Head of caudate nucleus (tissue), 42 donors: ENCODE measurements at regions of chr11 and their contacts with region 1.

Region 1: DNA sequence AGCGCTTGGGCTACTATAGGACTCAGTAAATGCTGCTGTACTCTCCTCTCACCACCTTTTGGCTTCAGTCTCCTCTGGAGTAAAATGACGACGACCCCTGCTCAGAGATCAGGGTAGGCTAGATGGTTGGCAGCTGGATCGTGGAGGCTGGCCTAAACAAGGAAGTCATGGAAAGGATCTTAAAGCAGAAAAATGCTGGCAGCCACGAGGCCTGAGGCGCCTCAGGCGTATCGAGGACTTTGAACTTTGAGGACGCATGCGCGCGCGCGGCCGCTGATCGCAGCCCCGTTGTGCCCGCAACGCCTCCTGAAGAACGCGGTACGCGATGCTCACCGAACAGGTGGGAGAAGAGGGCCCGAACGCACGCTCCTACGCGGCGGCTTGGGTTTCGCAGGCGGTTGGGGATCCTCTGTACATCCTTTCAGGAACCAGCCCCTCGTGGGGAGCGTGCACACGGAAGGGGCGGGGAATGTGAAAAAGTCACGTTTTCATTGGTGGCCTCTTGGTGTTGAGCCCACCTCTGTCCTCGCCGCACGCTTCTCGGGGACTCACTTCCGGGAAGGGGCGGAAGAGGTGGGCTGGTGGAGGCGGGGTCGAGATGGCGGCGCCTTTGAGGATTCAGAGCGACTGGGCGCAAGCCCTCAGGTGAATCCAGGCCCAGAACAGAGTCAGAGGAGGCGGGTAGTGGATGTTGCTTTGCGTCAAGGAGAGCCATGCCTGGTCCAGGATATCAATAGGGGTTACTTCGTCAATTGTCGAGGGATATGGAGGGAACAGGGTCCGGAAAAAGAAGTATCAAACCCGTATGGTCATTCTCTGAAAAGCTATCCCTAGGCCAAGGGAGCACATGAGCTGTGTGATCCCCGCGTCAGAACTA is at the starts of genes COA4 and PAAF1:
- DNase-seq: peak; percentile 93 to 98 (median 96)

Region 2: DNA sequence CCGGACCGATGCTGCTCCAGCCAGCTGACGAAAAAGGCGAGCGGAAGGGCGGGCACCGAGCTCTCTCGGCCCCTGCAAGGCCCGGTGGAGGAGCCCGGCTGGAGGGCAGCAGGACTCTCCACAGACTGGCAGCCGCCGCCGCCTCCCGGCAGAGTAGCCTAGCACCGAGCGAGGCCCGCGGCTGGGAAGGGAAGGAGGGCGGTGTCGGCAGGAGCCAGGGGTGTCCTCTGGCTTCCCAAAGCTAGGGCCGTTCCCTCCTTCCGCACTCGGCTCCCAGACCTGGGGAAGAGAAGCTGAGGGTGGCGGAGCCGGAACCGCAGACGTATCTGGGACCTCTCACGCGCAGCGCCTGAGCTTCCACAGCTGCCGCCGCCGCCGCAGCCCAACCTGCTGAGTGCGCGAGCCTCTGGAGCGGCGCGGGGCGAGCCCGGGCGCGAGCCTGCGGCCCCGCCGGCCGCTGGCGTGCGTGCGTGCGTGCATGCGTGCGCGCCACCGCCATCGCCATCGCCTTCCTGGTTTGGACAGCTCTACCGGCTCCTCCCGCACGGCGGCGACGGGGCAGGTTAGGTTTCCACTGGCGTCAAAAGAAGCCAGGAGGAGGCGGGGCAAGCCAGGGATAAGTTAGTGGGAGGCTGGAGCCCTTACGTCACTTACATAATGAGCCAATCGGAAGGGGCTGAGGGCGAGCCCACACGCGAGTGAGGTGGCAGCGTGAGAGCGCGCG is 115.8 kb before region 1 on chr11 and contains the start of gene RAB6A:
- intact Hi-C with region 1: loop called (anchors 2 kb)
- DNase-seq: peak; percentile 99 to 100 (median 100)

Region 3: GRCh38 chr11:73787643-73788537 is 88.8 kb before region 1 on chr11 and contains the start of gene MRPL48:
- intact Hi-C with region 1: loop called (anchors 5 kb)
- DNase-seq: peak; percentile 74 to 95 (median 89)